ENCODE measurements at regions of chr2 and their contacts with region 1.

Region 1: DNA sequence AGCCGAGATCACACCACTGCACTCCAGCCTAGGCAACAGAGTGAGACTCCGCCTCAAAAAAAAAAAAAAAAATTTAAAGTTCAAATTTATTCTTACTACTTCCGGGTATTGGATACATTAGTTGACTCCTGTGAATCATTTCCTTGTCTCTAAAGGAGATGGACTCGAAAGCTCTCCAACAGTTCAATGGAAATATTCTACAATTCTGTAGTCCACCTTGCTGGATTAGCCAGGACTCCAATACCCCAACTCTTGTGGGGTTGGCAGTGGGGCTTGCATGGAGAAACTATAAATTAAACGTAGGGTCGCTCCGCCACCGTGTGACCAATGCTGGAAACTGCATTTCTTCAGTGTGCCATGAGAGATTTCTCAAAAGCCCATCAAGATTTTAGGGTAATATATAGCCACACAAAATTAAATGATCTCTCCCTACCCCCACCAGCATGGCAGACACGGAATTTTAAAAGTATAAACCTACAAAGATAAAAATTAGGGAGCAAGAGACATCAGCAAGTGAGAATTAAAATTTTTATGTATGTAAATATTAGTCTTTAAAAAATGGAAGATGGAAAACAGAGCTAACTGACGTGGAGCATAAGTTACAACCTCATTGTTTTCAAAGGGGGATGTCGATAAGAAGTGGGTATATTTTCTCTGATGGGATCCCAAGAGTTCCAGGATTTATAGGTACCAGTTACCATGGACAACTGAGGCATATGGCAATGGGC is 27.8 kb upstream of the GAREM2 start:
- DNase-seq: peak; percentile 63 to 81
- H3K4me3 ChIP-seq: peak overlapping the region in 1 of 4 donors; percentile 12
- H3K27ac ChIP-seq: peak overlapping the region in 2 of 5 donors; percentile 48 to 62
- H3K4me1 ChIP-seq: peaks cover 0 to 23% (median 3%) of the 10 kb centered on the region in 4 donors
- H3K27me3 ChIP-seq: peaks cover 0 to 22% (median 0%) of the 10 kb centered on the region in 3 donors
- CTCF ChIP-seq: peak in 5 of 7 experiments; percentile 60 to 81 (median 76)
- EP300 ChIP-seq: no peak
- POLR2A ChIP-seq: no peak

Region 2: GRCh38 chr2:25606892-25607291 is 538.2 kb before region 1 on chr2:
- intact Hi-C with region 1: no loop called
- DNase-seq: peak in 1 of 2 donors; percentile 63
- H3K4me3 ChIP-seq: no peak overlapping the region
- H3K27ac ChIP-seq: no peak overlapping the region
- H3K4me1 ChIP-seq: no peaks in the 10 kb centered on the region
- H3K27me3 ChIP-seq: no peaks in the 10 kb centered on the region
- CTCF ChIP-seq: peak in 4 of 7 experiments; percentile 35 to 52 (median 42)
- EP300 ChIP-seq: no peak
- POLR2A ChIP-seq: no peak

Region 3: DNA sequence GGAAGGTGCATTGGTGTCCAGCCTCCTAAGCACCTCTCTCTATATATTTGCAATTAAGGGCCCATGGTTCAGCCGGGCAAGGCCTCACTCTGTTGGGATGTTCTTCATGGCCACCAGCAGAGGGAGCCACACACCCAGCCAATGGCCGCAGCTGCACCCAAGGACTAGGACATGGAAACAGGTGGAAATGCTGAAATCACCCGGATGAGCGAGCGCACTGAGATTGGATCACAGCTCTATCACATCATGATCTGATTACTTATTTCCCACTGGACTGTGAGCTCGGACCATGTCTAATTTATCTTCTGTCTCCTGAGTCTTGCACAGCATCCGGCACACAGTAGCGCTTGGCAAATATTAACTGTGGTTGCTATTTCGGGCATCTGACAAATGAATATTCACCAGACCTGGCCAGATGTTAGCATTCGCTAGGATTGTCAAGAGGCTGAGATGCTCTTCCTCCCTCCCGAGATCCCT is 194.0 kb before region 1 on chr2:
- intact Hi-C with region 1: loop called (anchors 10 kb)
- DNase-seq: peak; percentile 80 to 96
- H3K4me3 ChIP-seq: no peak overlapping the region
- H3K27ac ChIP-seq: peak overlapping the region in 1 of 5 donors; percentile 41
- H3K4me1 ChIP-seq: peaks cover 0 to 10% (median 4%) of the 10 kb centered on the region in 4 donors
- H3K27me3 ChIP-seq: no peaks in the 10 kb centered on the region
- CTCF ChIP-seq: peak in 5 of 7 experiments; percentile 86 to 96 (median 91)
- EP300 ChIP-seq: no peak
- POLR2A ChIP-seq: no peak